Panc1 (cell line): ENCODE measurements at regions of chr3 and their contacts with region 1.

Region 1: GRCh38 chr3:142240708-142241107 is 15.3 kb upstream of the GK5 start:
- DNase-seq: no peak
- ATAC-seq: no peak
- H3K4me3 ChIP-seq: no peak overlapping the region
- H3K27ac ChIP-seq: no peak overlapping the region
- H3K4me1 ChIP-seq: no peaks in the 10 kb centered on the region
- H3K27me3 ChIP-seq: peaks cover 9% of the 10 kb centered on the region; the same call in 1 of the 2 replicates
- CTCF ChIP-seq: no peak

Region 2: DNA sequence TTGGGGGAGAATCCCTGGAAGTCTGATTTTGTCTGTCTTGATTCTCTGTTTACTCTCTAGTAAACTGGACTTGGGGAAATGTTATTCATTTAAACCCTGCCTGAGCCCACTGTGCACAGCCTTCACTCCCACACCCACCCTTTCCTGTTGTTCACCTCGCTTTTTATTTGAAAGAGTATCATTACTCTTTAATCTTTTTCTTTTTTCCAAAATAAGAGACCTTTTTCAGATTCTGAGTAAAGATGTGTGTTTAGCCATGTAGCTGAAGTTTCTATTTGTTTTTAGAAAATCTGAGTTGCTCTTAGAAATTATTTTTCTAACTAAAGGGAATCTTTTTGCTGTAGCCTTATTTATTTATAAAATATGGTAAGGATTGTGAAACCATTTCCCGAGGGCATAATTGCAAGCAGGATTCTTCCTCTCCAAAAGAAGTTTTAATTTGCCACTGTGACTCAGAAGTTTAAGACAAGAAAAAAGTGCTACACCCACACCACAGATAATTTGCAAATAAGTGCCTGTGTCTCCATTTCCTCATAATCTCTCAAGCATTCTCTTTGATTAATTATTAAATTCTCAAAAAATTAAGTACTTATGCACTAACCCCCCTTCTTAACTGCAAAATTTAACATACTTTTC is 710.5 kb before region 1 on chr3:
- CTCF ChIA-PET with region 1: no interaction called
- POLR2A ChIA-PET with region 1: interaction called, 16 read pairs
- in situ Hi-C with region 1: no loop called
- intact Hi-C with region 1: no loop called
- DNase-seq: no peak
- ATAC-seq: no peak
- H3K4me3 ChIP-seq: no peak overlapping the region
- H3K27ac ChIP-seq: no peak overlapping the region
- H3K4me1 ChIP-seq: no peaks in the 10 kb centered on the region
- H3K27me3 ChIP-seq: no peaks in the 10 kb centered on the region
- CTCF ChIP-seq: no peak

Region 3: GRCh38 chr3:142188846-142189245 is 51.9 kb before region 1 on chr3:
- CTCF ChIA-PET with region 1: no interaction called
- POLR2A ChIA-PET with region 1: no interaction called
- in situ Hi-C with region 1: no loop called
- intact Hi-C with region 1: no loop called
- DNase-seq: no peak
- ATAC-seq: no peak
- H3K4me3 ChIP-seq: no peak overlapping the region
- H3K27ac ChIP-seq: no peak overlapping the region
- H3K4me1 ChIP-seq: no peaks in the 10 kb centered on the region
- H3K27me3 ChIP-seq: no peaks in the 10 kb centered on the region
- CTCF ChIP-seq: no peak

Region 4: GRCh38 chr3:144162079-144162478 is 1921.4 kb after region 1 on chr3:
- CTCF ChIA-PET with region 1: no interaction called
- POLR2A ChIA-PET with region 1: no interaction called
- in situ Hi-C with region 1: no loop called
- intact Hi-C with region 1: no loop called
- DNase-seq: peak; percentile 68
- ATAC-seq: no peak
- H3K4me3 ChIP-seq: no peak overlapping the region
- H3K27ac ChIP-seq: no peak overlapping the region
- H3K4me1 ChIP-seq: no peaks in the 10 kb centered on the region
- H3K27me3 ChIP-seq: no peaks in the 10 kb centered on the region
- CTCF ChIP-seq: no peak